HAP-1 (cell line): ENCODE measurements at regions of chr2 and their contacts with region 1.

Region 1: GRCh38 chr2:158893026-158893425 is 75.4 kb upstream of the TANC1 start:
- DNase-seq: no peak
- H3K4me3 ChIP-seq: no peak overlapping the region
- H3K4me1 ChIP-seq: no peaks in the 10 kb centered on the region
- H3K27me3 ChIP-seq: no peaks in the 10 kb centered on the region; the same call in 1 of the 2 replicates

Region 2: DNA sequence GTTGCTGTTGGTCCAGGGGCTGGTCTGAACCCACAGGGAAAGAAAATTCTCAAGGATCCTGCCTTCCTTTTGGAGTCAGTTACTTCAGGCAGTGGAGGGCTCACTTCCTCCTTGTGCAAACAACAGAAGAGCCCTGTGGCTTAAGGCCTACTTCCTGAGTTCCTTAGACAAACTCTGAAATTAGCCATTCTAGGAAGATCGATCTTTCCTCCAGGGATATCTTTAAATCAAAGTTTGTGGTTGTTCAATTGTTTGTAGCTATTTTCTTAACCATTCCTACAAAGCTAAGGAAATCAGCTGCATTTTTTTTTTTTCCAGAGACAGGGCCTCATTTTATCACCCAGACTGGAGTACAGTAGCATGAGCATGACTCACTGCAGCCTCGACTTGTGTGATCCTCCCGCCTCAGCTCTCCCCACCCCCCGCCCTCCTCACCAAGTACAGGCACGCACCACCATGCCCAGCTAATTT is 231.4 kb after region 1 on chr2:
- in situ Hi-C with region 1: loop called (anchors 5 kb)
- DNase-seq: no peak
- H3K4me3 ChIP-seq: no peak overlapping the region
- H3K4me1 ChIP-seq: no peaks in the 10 kb centered on the region
- H3K27me3 ChIP-seq: no peaks in the 10 kb centered on the region